ENCODE measurements at regions of chr6 and their contacts with region 1.

Region 1: GRCh38 chr6:14075095-14075503 is 42.5 kb upstream of the CD83 start:
- DNase-seq: no peak
- ATAC-seq: peak; percentile 73
- H3K4me3 Mint-ChIP-seq: peak overlapping the region; percentile 81
- H3K27ac Mint-ChIP-seq: peak overlapping the region; percentile 95
- H3K4me1 Mint-ChIP-seq: peaks cover 75% of the 10 kb centered on the region
- H3K27me3 Mint-ChIP-seq: no peaks in the 10 kb centered on the region
- CTCF ChIP-seq: no peak

Region 2: GRCh38 chr6:14088600-14089192 is 13.6 kb after region 1 on chr6:
- CTCF ChIA-PET with region 1: interaction called, 5 read pairs
- POLR2A ChIA-PET with region 1: interaction called, 349 read pairs
- intact Hi-C with region 1: loop called (anchors 1 kb)
- DNase-seq: no peak
- ATAC-seq: peak; percentile 11
- H3K4me3 Mint-ChIP-seq: peak overlapping the region; percentile 50
- H3K27ac Mint-ChIP-seq: peak overlapping the region; percentile 100
- H3K4me1 Mint-ChIP-seq: peaks cover 91% of the 10 kb centered on the region
- H3K27me3 Mint-ChIP-seq: no peaks in the 10 kb centered on the region
- CTCF ChIP-seq: no peak

Region 3: DNA sequence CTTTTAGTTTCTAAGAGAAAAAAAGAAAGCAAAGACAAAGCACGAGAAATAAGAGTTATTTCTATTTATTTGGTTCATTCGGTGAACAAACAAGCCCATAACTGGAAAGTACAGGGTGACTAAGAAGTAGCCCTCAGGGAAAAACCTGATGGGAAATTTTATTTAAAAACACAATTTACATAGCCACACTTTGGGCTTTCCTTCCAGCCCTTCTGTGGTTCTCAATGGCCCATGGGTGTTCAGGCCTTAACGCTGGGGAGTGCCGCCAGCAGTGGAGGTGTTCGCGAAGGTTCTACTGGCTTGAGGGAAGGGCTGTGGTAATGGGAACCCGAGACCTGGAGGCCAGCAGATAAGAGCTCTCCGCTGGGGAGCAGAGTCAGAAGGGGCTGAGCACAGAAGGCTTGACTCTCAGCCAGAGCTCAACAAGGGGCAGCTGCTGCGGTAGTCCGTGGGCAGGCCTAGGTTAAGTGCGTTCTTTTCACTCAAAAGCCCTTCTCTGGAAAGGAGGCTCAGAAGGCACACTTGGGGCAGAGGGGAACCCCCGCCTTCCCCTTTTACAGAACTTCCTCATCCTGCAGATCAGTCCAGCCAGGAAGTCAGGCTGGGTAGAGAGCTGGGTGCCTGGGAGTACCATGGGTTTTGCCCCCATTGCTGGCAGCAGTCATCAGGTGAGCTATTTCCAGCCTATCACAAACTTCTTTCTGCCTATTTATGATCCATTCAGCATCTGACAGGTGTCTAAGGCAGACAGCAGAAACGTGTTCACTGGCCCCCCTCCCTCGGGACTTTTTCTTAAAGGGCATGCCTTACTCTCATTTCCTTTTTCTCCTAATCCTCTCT is 33.7 kb after region 1 on chr6:
- CTCF ChIA-PET with region 1: interaction called, 15 read pairs
- POLR2A ChIA-PET with region 1: interaction called, 190 read pairs
- intact Hi-C with region 1: loop called (anchors 1 kb)
- DNase-seq: peak; percentile 69
- ATAC-seq: peak; percentile 71
- H3K4me3 Mint-ChIP-seq: peak overlapping the region; percentile 79
- H3K27ac Mint-ChIP-seq: peak overlapping the region; percentile 97
- H3K4me1 Mint-ChIP-seq: peaks cover 67% of the 10 kb centered on the region
- H3K27me3 Mint-ChIP-seq: no peaks in the 10 kb centered on the region
- CTCF ChIP-seq: no peak

Region 4: GRCh38 chr6:14123386-14124111 is 48.5 kb after region 1 on chr6:
- CTCF ChIA-PET with region 1: interaction called, 3 read pairs
- POLR2A ChIA-PET with region 1: interaction called, 183 read pairs
- intact Hi-C with region 1: loop called (anchors 1 kb)
- DNase-seq: no peak
- ATAC-seq: no peak
- H3K4me3 Mint-ChIP-seq: peak overlapping the region; percentile 95
- H3K27ac Mint-ChIP-seq: peak overlapping the region; percentile 94
- H3K4me1 Mint-ChIP-seq: peaks cover 84% of the 10 kb centered on the region
- H3K27me3 Mint-ChIP-seq: no peaks in the 10 kb centered on the region
- CTCF ChIP-seq: no peak

Region 5: DNA sequence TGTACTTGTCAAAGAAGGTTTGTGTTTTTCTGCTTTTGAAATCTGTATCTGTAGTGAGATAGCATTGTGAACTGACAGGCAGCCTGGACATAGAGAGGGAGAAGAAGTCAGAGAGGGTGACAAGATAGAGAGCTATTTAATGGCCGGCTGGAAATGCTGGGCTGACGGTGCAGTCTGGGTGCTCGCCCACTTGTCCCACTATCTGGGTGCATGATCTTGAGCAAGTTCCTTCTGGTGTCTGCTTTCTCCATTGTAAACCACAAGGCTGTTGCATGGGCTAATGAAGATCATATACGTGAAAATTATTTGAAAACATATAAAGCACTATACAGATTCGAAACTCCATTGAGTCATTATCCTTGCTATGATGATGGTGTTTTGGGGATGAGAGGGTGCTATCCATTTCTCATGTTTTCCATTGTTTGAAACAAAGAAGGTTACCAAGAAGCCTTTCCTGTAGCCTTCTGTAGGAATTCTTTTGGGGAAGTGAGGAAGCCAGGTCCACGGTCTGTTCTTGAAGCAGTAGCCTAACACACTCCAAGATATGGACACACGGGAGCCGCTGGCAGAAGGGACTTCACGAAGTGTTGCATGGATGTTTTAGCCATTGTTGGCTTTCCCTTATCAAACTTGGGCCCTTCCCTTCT is 60.9 kb after region 1 on chr6:
- CTCF ChIA-PET with region 1: no interaction called
- POLR2A ChIA-PET with region 1: interaction called, 37 read pairs
- intact Hi-C with region 1: no loop called
- DNase-seq: no peak
- ATAC-seq: no peak
- H3K4me3 Mint-ChIP-seq: no peak overlapping the region
- H3K27ac Mint-ChIP-seq: peak overlapping the region; percentile 73
- H3K4me1 Mint-ChIP-seq: peaks cover 65% of the 10 kb centered on the region
- H3K27me3 Mint-ChIP-seq: no peaks in the 10 kb centered on the region
- CTCF ChIP-seq: no peak

Region 6: GRCh38 chr6:14254505-14254904 is 179.4 kb after region 1 on chr6:
- CTCF ChIA-PET with region 1: no interaction called
- POLR2A ChIA-PET with region 1: no interaction called
- intact Hi-C with region 1: no loop called
- DNase-seq: no peak
- ATAC-seq: peak; percentile 87
- H3K4me3 Mint-ChIP-seq: peak overlapping the region; percentile 58
- H3K27ac Mint-ChIP-seq: peak overlapping the region; percentile 75
- H3K4me1 Mint-ChIP-seq: peaks cover 46% of the 10 kb centered on the region
- H3K27me3 Mint-ChIP-seq: no peaks in the 10 kb centered on the region
- CTCF ChIP-seq: no peak